ENCODE measurements at regions of chr10 and their contacts with region 1.

Region 1: GRCh38 chr10:30392564-30392990 is 41.4 kb upstream of the MAP3K8 start:
- DNase-seq: peak; percentile 88
- CTCF ChIP-seq: peak; percentile 82

Region 2: GRCh38 chr10:30359373-30360206 is 33.0 kb before region 1 on chr10:
- CTCF ChIA-PET with region 1: interaction called, 13 read pairs
- POLR2A ChIA-PET with region 1: no interaction called
- DNase-seq: peak; percentile 71
- CTCF ChIP-seq: peak; percentile 90

Region 3: GRCh38 chr10:30404540-30404939 is 12.0 kb after region 1 on chr10:
- CTCF ChIA-PET with region 1: interaction called, 20 read pairs
- POLR2A ChIA-PET with region 1: no interaction called
- DNase-seq: no peak
- CTCF ChIP-seq: no peak

Region 4: GRCh38 chr10:30534465-30535144 is 142.0 kb after region 1 on chr10:
- CTCF ChIA-PET with region 1: interaction called, 48 read pairs
- POLR2A ChIA-PET with region 1: no interaction called
- DNase-seq: peak; percentile 67
- CTCF ChIP-seq: peak; percentile 88

Region 5: DNA sequence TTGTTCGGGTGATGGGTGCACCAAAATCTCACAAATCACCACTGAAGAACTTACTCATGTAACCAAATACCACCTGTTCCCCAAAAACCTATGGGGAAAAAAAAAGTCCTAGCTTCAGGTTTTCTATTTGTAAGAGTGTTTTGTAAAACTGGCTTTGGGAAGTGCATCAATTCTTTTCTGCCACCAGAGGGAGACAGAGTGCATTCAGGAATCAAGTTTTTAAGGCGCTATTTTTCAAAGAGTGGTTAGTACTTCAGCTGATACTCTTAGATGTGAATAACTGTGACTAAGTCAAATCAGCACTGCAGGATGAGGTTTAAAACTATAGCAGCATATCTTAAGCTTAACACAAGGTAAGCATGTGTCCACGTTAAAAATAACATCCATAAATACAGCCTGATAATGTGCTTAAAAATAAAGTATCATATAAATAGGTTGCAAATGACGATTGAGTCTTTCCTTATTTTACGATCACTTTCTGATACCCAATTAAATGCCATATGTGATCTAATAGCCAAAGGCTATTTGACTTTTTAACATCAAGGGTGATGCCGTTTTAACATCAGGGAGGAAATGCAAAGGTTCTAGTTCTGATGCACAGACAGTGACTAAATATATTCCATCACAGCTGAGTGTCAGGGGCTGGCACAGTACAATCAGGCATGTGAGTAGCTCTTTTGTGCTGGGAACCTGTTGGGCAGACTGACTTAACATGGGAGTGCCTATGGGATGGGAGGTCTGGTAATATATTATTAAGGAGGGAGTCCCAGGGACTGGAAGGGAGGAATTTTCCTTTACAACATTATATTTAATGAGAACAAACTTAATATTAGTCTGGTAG is 247.6 kb after region 1 on chr10:
- CTCF ChIA-PET with region 1: interaction called, 18 read pairs
- POLR2A ChIA-PET with region 1: no interaction called
- DNase-seq: peak; percentile 53
- CTCF ChIP-seq: peak; percentile 88

Measured in GM10248 (cell line).